ENCODE measurements at regions of chr11 and their contacts with region 1.

Region 1: GRCh38 chr11:117226388-117227385 is 5.2 kb downstream of the PCSK7 start:
- DNase-seq: peak in 1 of 2 donors; percentile 43
- ATAC-seq: peak; percentile 60

Region 2: GRCh38 chr11:117098269-117099232 is 128.1 kb before region 1 on chr11 and contains the start of gene SIK3:
- intact Hi-C with region 1: loop called in 1 of 2 experiments (anchors 5 kb)
- DNase-seq: peak; percentile 91 to 97
- ATAC-seq: peak; percentile 91
- total RNA-seq, gene SIK3: 35.3 to 39.0 TPM

Region 3: GRCh38 chr11:117180661-117181585 is 45.8 kb before region 1 on chr11:
- intact Hi-C with region 1: loop called (anchors 5 kb)
- DNase-seq: peak; percentile 88 to 89
- ATAC-seq: peak; percentile 49